ENCODE measurements at regions of chr15 and their contacts with region 1.

Region 1: DNA sequence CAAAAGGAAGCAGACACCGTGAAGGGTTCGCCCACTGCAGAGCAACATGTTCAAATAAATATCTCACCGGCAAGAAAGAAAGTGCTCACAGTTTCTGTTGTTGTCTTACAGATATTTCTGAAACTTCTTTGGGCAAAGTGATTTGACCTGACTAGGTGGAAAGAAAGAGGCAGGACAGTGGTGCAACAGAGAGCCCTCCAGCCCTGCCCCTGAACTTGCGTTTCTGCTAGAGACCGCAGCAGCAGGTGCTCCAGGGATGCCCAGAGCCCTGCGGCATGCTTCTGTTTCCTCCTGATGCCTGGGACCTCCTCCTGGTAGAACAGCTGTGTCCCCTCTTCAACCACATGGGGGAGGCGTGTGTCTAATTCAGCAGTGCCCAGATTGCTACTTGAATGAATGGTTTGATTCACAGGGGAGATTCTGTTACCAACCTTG is 123.4 kb downstream of the ATP10A start:
- DNase-seq: no peak

Region 2: DNA sequence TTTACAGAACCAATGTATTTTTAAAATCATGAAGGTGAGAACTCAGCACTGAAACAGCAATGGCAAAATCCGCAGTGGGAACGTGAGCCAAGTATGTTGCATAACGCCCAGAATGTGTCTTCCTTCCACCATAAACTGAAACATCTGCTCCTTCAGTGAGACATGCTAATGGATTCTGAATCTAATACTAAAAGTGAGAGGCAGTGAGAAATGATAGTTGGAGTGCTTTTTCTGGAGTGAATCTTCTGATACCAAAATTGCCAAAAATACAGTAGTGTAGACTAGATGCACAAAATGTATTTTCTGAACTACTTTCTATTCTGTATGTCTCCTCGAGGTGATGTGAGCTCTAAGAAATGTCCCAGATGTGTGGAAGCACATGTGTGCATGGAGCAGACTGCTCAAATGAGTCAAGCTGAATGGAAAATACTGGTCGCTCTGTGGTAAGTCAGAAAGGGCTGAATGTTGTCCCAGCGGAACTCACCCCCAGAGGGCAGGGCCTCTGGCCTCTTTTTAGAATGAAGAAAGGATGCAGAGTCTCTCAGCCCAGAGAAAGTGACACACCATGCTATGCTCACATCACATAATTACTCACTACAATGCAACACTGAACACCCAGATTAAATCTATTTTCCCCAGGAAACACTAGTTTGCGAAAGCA is 50.4 kb after region 1 on chr15:
- intact Hi-C with region 1: loop called (anchors 10 kb)
- DNase-seq: no peak

Region 3: DNA sequence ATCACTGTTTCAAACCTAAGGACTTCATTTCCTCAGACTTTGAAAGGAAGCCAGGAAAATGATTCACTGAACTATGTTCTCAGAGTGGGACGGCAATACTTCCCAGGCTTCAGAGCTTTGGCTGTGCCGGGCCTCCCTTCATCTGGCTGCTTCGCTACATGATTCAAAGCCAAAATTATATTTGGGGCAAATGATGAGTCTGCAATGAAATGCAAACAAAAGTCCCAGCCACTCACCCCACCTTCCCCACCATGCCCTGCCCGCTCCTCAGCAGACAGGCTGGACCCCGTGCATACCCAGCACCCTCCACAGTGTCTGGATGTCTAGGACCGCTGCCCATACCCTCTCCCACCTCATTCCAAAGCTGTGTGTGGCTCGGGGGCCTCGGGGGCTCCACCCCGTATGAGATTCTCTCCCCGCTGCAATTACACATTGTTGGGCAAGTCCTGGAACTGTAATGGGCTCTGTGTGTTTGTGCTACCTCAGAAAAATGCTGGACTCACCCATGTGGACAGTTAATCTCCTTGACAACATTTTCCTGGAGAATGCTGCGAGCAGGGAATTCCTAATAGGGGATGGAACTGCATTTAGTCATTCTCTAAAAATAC is 91.2 kb after region 1 on chr15:
- intact Hi-C with region 1: no loop called
- DNase-seq: no peak

Region 4: GRCh38 chr15:25863111-25863967 is 123.6 kb after region 1 on chr15 and contains the start of gene ATP10A:
- intact Hi-C with region 1: loop called (anchors 5 kb)
- DNase-seq: no peak
- total RNA-seq, gene ATP10A: 0.94 TPM